Activated T-helper 1 cell treated with anti-CD3 and anti-CD28 coated beads, Interleukin-12 subunit alpha, Interleukin-12 subunit beta, Interleukin-2, Interleukin-4 antibody, amounts not matched to agents 30 ng/mL and 10 ng/mL and 1 ng/mL, durations not matched to agents 14 hours and 24 hours and 36 hours (primary cell): ENCODE measurements at regions of chr2 and their contacts with region 1.

Region 1: GRCh38 chr2:233251306-233252116 is at the start of gene ATG16L1:
- DNase-seq: peak; percentile 95
- H3K4me3 Mint-ChIP-seq: peak within 1 kb of the TSS; percentile 93
- H3K27ac Mint-ChIP-seq: peak within 1 kb of the TSS; percentile 94
- H3K4me1 Mint-ChIP-seq: peaks cover 68% of the 10 kb centered on the region
- H3K27me3 Mint-ChIP-seq: no peaks in the 10 kb centered on the region
- total RNA-seq, gene ATG16L1: 42.4 and 42.7 TPM in 2 replicates

Region 2: DNA sequence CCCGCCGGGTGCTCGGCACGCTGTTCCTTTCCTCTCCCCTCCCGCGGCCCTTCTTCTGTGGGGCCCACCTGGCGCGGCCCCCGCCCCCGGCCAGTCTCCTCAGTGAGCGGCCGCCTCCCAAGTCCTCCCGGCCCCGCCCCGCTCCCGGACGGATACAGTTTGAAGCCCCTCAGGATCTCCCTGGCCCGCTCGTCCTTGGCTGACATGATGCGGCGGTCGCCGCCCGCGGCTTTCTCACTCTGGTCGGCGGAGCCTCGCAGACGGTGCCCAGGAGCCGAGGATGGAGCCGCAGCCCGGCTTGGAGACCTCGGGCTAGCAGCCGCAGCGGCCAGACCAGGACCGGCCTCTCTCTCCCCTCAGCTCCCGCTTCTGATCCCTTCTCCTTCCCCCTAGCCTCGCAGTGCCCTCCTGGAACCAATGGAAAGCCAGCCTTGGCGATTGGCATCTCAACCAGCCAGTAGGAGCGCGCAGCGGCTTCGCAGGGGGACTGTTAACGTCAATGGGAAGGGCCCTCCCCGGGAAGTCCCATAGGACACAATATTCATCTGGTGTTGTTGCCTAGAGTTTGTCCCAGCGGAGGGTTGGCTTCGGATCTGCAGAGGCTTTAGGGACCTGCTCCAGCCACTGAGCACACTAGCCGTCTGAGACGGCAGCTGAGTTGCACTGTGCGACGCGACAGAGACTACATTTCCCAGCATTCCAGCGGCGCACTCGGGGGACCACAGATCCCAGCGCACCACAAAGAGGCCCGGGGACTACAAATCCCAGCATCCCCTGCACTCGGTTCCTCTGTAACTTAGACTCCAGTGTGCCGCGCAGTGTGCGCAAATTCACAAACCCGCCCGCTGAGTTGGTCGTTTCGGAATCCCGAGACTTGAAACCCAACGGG is 1470.4 kb before region 1 on chr2 and contains the start of gene PDE6D:
- intact Hi-C with region 1: loop called (anchors 5 kb)
- DNase-seq: peak; percentile 98
- H3K4me3 Mint-ChIP-seq: peak within 1 kb of the TSS; percentile 93
- H3K27ac Mint-ChIP-seq: peak within 1 kb of the TSS; percentile 94
- H3K4me1 Mint-ChIP-seq: peaks cover 56% of the 10 kb centered on the region
- H3K27me3 Mint-ChIP-seq: no peaks in the 10 kb centered on the region
- total RNA-seq, gene PDE6D: 31.0 and 31.9 TPM in 2 replicates

Region 3: DNA sequence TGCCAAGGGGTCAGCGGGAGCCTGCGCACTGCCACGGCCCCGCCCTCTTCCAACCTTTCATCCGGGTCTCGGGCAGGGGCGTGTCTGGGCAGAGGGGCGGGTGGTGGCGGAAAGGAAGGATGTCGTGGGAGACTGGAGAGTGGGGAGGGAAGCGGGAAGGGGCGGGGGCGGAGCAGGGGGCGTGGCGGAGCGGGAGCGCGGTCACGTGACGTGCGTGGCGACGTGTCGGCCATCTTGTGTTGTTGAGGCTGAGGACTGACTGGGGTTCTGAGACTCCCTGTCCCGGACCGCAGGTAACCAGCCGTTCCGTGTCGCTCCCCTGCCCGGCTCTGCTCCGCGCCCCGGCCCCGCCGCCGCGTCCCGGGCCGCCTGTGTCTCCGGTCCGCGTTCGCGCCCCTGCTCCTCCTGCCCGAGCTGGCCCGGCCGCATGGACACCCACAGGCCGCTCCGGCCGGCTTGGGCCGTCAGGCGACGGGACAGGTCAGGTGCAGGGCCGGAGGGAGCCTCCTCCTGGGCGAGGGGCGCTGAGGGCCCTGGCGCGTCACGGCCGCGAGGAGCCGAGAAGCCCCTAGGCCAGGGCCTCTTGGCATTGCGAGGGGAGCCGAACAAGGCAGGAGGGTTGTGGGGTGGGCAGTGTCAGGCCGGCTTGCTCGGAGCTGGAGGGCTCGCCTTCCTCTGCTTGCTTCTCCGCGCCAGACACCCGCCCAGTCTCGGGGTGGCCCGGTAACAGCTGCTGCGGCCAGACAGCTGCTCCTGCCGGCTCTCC is 554.2 kb before region 1 on chr2 and contains the start of gene GIGYF2:
- intact Hi-C with region 1: loop called (anchors 5 kb)
- DNase-seq: peak; percentile 90
- H3K4me3 Mint-ChIP-seq: peak within 1 kb of the TSS; percentile 99
- H3K27ac Mint-ChIP-seq: peak within 1 kb of the TSS; percentile 87
- H3K4me1 Mint-ChIP-seq: peaks cover 30% of the 10 kb centered on the region
- H3K27me3 Mint-ChIP-seq: no peaks in the 10 kb centered on the region
- total RNA-seq, gene GIGYF2: 71.1 and 74.6 TPM in 2 replicates

Region 4: DNA sequence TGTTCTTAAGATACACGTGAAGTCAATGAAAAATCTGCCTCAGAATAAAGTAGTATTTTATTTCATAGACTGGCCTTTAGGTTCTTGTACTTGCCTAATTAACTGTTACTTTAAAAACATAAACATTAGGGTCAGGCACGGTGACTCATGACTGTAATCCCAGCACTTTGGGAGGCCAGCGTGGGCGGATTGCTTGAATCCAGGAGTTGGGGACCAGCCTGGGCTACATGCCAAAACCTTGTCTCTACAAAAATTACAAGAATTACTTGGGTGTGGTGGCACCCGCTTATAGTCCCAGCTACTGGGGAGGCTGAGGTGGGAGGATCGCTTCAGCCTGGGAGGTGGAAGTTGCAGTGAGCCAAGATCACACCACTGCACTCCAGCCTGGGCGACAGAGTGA is 397.4 kb before region 1 on chr2:
- intact Hi-C with region 1: loop called (anchors 1 kb)
- DNase-seq: no peak
- H3K4me3 Mint-ChIP-seq: no peak overlapping the region
- H3K27ac Mint-ChIP-seq: no peak overlapping the region
- H3K4me1 Mint-ChIP-seq: no peaks in the 10 kb centered on the region
- H3K27me3 Mint-ChIP-seq: no peaks in the 10 kb centered on the region

Region 5: DNA sequence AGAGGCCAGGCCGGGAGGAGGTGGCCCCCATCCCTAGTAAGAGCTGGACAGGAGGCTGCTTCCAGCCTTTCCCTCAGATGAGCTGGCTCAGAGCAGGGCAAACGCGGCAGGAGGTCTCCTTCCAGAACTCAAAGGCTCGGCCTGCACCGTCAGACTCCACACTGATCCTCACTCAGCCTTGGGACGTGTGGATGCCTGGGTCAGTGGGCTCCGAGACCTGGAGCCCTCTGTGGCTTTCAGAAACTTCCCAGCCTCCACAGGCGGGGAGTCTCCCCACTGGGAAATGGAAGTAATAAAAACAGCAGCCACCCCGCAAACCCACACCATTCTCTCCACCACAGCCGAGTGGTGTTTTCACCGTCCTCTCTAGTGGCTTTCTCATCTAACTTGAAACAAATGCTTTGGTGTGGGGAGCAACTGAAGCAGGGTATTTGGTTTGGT is 137.1 kb before region 1 on chr2:
- intact Hi-C with region 1: no loop called
- DNase-seq: no peak
- H3K4me3 Mint-ChIP-seq: no peak overlapping the region
- H3K27ac Mint-ChIP-seq: no peak overlapping the region
- H3K4me1 Mint-ChIP-seq: peaks cover 53% of the 10 kb centered on the region
- H3K27me3 Mint-ChIP-seq: no peaks in the 10 kb centered on the region

Region 6: GRCh38 chr2:233178994-233179847 is 72.3 kb before region 1 on chr2:
- intact Hi-C with region 1: loop called (anchors 5 kb)
- DNase-seq: no peak
- H3K4me3 Mint-ChIP-seq: no peak overlapping the region
- H3K27ac Mint-ChIP-seq: no peak overlapping the region
- H3K4me1 Mint-ChIP-seq: no peaks in the 10 kb centered on the region
- H3K27me3 Mint-ChIP-seq: no peaks in the 10 kb centered on the region

Region 7: DNA sequence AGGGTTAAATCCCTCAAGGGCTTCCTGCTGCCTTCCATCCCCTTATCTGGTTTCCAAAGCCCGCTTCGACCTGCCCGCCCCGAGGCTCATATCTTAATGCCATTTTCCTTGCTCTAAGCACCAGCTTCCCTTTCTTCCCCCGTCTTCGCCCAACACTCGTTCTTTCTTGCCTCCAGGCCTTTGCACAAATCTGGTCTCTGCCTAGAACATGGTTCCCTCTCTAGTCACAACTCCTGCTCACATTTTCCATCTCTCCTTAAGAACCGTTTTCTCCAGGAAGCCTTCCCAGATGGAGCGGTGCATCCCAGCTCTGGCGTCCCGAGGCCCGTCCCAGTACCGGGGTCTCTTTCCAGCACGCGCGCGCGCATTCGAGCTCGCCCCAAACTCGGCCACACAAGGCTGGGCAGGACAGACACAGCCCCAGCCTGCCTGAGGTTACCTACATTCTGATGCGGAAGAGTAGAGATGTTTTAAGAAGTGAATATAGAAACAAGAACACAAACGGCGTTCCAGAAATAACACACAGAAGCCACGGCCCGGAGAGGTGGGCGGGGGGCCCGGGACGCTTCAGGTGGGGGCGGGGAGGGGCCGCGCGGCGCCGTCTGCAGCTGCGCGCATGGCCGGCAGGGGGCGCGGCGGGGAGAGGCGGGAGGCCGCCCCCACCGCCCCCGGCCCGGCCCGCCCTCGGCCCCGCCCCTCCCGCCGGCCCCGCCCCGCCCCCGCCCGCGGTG is 102.4 kb after region 1 on chr2 and contains the start of gene DGKD:
- intact Hi-C with region 1: loop called (anchors 5 kb)
- DNase-seq: no peak
- H3K4me3 Mint-ChIP-seq: peak within 1 kb of the TSS; percentile 87
- H3K27ac Mint-ChIP-seq: peak within 1 kb of the TSS; percentile 90
- H3K4me1 Mint-ChIP-seq: peaks cover 67% of the 10 kb centered on the region
- H3K27me3 Mint-ChIP-seq: no peaks in the 10 kb centered on the region
- total RNA-seq, gene DGKD: 42.5 and 43.7 TPM in 2 replicates

Region 8: GRCh38 chr2:234308813-234309195 is 1057.3 kb after region 1 on chr2:
- intact Hi-C with region 1: loop called (anchors 10 kb)
- DNase-seq: peak; percentile 79
- H3K4me3 Mint-ChIP-seq: peak overlapping the region; percentile 68
- H3K27ac Mint-ChIP-seq: peak overlapping the region; percentile 99
- H3K4me1 Mint-ChIP-seq: peaks cover 70% of the 10 kb centered on the region
- H3K27me3 Mint-ChIP-seq: no peaks in the 10 kb centered on the region